ENCODE measurements at regions of chr5 and their contacts with region 1.

Region 1: DNA sequence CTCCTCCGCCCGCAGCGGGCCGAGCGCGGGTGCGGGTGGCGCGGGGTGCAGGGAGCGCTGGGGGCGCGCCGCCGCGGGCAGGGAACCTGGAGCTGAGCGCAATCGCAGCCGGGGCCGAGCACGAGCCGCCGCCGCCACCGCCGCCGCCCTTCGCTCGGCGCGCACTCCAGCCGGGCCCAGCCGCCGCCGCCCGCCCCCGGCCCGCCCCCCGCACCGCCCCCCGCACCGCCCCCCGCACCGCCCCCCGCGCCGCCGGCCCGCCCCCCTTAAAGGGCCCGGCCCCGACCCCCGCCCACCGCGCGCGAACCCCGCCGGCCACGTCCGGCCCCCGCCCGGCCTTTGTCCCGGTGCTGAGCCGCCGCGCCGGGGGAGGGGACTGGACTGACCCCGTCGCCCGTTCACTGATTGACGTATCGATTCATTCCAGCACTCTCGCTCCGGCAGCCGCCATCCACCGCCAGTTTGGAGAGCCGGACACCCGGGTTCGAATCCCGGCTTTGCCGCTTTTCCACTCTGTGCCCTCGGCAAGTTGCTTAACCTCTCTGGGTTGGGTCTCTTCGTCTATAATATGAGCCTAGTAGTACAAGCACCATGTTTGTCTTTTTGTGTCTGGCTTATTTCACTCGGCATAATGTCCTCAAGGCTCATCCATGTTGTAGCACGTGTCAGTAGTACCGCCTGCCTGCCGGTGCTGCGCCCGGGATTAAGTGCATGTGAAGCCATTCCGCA is at the start of gene SH3PXD2B:
- DNase-seq: peak in 1 of 2 experiments; percentile 70
- H3K4me3 ChIP-seq: peak within 1 kb of the TSS; percentile 76
- H3K27ac ChIP-seq: no peak within 1 kb of the TSS
- H3K4me1 ChIP-seq: peaks cover 18% of the 10 kb centered on the region
- H3K27me3 ChIP-seq: no peaks in the 10 kb centered on the region
- CTCF ChIP-seq: no peak
- total RNA-seq, gene SH3PXD2B: 26.1 and 29.3 TPM in 2 replicates

Region 2: GRCh38 chr5:172106511-172107356 is 347.8 kb before region 1 on chr5:
- CTCF ChIA-PET with region 1: no interaction called
- POLR2A ChIA-PET with region 1: no interaction called
- intact Hi-C with region 1: no loop called
- DNase-seq: peak in 1 of 2 experiments; percentile 61
- H3K4me3 ChIP-seq: peak overlapping the region; percentile 29; the same call in 1 of the 2 replicates
- H3K27ac ChIP-seq: peak overlapping the region; percentile 25; the same call in 1 of the 2 replicates
- H3K4me1 ChIP-seq: peaks cover 27% of the 10 kb centered on the region
- H3K27me3 ChIP-seq: no peaks in the 10 kb centered on the region
- CTCF ChIP-seq: peak; percentile 99

Region 3: DNA sequence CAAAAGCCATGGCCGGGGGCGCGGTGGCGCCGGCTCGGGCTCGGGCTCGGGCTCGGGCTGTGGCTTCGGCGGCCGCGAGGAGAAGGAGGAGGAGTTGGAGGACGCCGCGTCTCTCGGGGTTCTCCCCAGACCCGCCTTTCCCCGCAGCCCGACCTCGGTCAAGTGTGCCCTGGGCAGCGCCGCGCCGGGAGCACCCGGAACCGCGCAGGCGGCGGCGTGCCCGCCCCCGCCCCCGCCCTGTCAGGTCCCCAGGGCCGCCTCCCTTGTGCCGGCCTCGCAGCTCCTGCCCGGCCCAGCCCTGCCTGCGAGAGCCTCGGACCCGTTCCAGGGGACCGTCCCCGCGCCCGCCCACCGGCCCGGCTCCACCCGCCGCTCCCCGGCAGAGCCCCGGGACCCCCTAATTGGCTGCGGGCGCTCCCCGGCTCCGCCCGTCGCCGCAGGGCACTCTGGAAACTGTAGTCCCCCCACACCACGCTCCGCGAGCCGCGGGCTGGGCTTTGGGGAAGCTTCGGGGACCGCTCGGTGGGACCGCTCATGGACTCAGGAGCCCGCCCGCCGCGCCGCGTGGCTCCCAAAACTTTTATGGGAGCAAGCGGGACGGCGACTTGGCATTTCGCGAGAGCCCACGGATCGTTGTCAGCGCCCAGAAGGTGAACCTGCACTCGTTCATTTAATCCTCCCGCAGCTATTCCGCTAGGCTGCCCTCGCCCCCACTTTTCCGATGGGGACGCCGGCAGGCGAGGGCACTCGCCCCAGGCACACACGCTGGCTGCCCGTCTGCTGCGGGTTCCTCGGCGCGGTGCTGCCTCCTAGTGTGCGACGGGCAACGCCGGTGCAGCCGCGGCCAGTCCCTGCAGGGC is 266.3 kb before region 1 on chr5 and contains the start of gene STK10:
- CTCF ChIA-PET with region 1: no interaction called
- POLR2A ChIA-PET with region 1: no interaction called
- intact Hi-C with region 1: loop called (anchors 5 kb)
- DNase-seq: peak; percentile 71 to 93
- H3K4me3 ChIP-seq: peak within 1 kb of the TSS; percentile 67
- H3K27ac ChIP-seq: peak within 1 kb of the TSS; percentile 65
- H3K4me1 ChIP-seq: peaks cover 21% of the 10 kb centered on the region
- H3K27me3 ChIP-seq: no peaks in the 10 kb centered on the region
- CTCF ChIP-seq: peak; percentile 81
- total RNA-seq, gene STK10: 23.3 and 31.5 TPM in 2 replicates

Region 4: DNA sequence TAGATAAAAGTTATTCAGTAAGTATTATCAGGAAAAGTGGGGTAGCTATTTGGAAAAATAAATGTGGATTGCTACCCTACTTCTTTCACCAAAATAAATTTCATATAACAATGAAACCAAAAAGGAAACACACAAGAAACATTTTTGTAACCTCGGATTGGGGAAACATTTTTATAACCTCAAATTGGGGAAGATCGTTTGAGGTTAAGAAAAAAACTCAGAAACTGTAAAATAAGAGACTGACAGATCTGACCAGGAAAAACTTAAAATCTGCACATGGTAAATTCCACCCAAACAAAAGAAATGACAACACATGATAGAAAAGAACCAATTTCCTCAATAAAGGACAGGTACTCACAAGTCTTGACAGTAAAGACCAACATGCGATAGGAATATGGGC is 247.0 kb before region 1 on chr5:
- CTCF ChIA-PET with region 1: no interaction called
- POLR2A ChIA-PET with region 1: no interaction called
- intact Hi-C with region 1: no loop called
- DNase-seq: no peak
- H3K4me3 ChIP-seq: no peak overlapping the region
- H3K27ac ChIP-seq: no peak overlapping the region
- H3K4me1 ChIP-seq: no peaks in the 10 kb centered on the region
- H3K27me3 ChIP-seq: no peaks in the 10 kb centered on the region
- CTCF ChIP-seq: no peak

Region 5: DNA sequence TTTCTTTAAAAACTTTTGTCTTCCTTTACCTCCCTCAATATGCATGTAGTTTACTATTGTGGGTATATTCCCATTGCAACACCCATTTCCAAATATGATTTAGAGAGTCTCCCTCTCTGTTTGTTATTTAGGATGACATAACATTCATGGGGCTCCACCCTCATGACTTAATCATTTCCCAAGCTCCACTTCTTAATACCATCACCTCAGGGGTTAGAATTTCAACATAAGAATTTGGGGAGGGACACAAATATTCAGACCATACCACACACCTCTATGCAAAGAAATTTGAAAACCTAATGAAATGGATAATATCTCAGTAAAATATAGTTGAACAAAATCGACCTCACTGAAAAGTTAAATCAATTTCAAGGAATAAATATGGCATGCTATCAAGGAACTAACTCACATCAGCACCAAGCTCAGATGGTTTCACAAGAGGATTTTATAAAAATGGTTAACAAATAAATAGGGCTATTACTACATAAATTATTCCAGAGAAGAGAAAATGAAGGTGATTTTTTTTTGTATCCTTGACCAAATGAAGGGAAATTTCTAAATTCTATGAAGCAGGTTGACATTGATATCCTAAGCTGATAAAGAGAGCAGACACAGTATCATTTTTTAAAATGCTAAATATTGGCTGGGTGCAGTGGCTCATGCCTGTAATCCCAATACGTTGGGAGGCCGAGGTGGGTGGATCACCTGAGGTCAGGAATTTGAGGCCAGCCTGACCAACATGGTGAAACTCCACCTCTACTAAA is 150.8 kb before region 1 on chr5:
- CTCF ChIA-PET with region 1: no interaction called
- POLR2A ChIA-PET with region 1: interaction called, 3 read pairs
- intact Hi-C with region 1: loop called (anchors 5 kb)
- DNase-seq: peak in 1 of 2 experiments; percentile 64
- H3K4me3 ChIP-seq: peak overlapping the region; percentile 40; the same call in 1 of the 2 replicates
- H3K27ac ChIP-seq: peak overlapping the region; percentile 77
- H3K4me1 ChIP-seq: peaks cover 29% of the 10 kb centered on the region
- H3K27me3 ChIP-seq: no peaks in the 10 kb centered on the region
- CTCF ChIP-seq: no peak

Region 6: GRCh38 chr5:172361566-172362238 is 92.8 kb before region 1 on chr5:
- CTCF ChIA-PET with region 1: no interaction called
- POLR2A ChIA-PET with region 1: no interaction called
- intact Hi-C with region 1: loop called (anchors 5 kb)
- DNase-seq: peak; percentile 81 to 98
- H3K4me3 ChIP-seq: no peak overlapping the region; the same call in 1 of the 2 replicates
- H3K27ac ChIP-seq: peak overlapping the region; percentile 97
- H3K4me1 ChIP-seq: peaks cover 28% of the 10 kb centered on the region
- H3K27me3 ChIP-seq: no peaks in the 10 kb centered on the region
- CTCF ChIP-seq: no peak

Region 7: GRCh38 chr5:172412724-172413286 is 41.7 kb before region 1 on chr5:
- CTCF ChIA-PET with region 1: interaction called, 5 read pairs
- POLR2A ChIA-PET with region 1: interaction called, 5 read pairs
- intact Hi-C with region 1: loop called (anchors 2 kb)
- DNase-seq: peak; percentile 75 to 80
- H3K4me3 ChIP-seq: no peak overlapping the region
- H3K27ac ChIP-seq: peak overlapping the region; percentile 64
- H3K4me1 ChIP-seq: peaks cover 69% of the 10 kb centered on the region
- H3K27me3 ChIP-seq: no peaks in the 10 kb centered on the region
- CTCF ChIP-seq: no peak

Region 8: GRCh38 chr5:172543484-172544298 is 89.2 kb after region 1 on chr5:
- CTCF ChIA-PET with region 1: no interaction called
- POLR2A ChIA-PET with region 1: no interaction called
- intact Hi-C with region 1: no loop called
- DNase-seq: no peak
- H3K4me3 ChIP-seq: no peak overlapping the region
- H3K27ac ChIP-seq: no peak overlapping the region
- H3K4me1 ChIP-seq: no peaks in the 10 kb centered on the region
- H3K27me3 ChIP-seq: peaks cover 67% of the 10 kb centered on the region
- CTCF ChIP-seq: no peak

Region 9: DNA sequence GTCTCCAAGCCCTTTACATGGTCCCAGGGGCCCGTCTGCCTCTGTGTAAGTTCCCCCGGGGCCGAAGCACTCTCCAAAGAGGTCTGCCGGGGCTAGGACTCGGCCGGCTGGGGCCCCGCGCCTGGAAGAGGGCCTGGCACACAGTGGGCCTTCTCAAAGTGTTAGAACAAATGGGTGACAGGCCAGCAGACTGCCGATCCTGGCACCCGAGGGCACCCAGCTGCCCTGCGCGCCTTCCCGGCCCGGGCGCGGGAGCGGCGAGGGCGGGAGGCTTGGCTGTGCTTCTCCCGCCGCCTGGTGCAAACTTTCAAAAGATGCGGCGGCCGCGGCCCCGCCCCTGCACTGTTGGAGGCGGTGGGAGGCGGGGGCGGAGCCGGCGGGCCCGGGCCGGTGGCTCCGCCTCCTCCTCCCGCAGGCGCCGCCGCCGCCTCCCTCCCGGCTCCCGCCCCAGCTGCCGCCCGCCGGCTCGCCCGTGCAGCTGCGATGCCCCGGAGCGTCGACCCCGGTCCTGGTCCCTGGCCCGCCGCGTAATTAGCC is 186.4 kb after region 1 on chr5 and contains the start of gene NEURL1B:
- CTCF ChIA-PET with region 1: no interaction called
- POLR2A ChIA-PET with region 1: no interaction called
- intact Hi-C with region 1: no loop called
- DNase-seq: peak in 1 of 2 experiments; percentile 81
- H3K4me3 ChIP-seq: peak within 1 kb of the TSS; percentile 55
- H3K27ac ChIP-seq: no peak within 1 kb of the TSS
- H3K4me1 ChIP-seq: peaks cover 7% of the 10 kb centered on the region; the same call in 1 of the 2 replicates
- H3K27me3 ChIP-seq: no peaks in the 10 kb centered on the region
- CTCF ChIP-seq: no peak
- total RNA-seq, gene NEURL1B: 14.3 and 20.4 TPM in 2 replicates